ENCODE measurements at regions of chr11 and their contacts with region 1.

Region 1: GRCh38 chr11:33987975-33988580 is 63.5 kb upstream of the CAPRIN1 start:
- DNase-seq: no peak
- ATAC-seq: peak; percentile 96
- H3K4me3 ChIP-seq: no peak overlapping the region
- H3K27ac ChIP-seq: no peak overlapping the region
- H3K4me1 ChIP-seq: no peaks in the 10 kb centered on the region
- H3K27me3 ChIP-seq: no peaks in the 10 kb centered on the region
- CTCF ChIP-seq: peak; percentile 74 to 77 (median 76)
- EP300 ChIP-seq: no peak
- POLR2A ChIP-seq: no peak
- RAD21 ChIP-seq: peak; percentile 85

Region 2: DNA sequence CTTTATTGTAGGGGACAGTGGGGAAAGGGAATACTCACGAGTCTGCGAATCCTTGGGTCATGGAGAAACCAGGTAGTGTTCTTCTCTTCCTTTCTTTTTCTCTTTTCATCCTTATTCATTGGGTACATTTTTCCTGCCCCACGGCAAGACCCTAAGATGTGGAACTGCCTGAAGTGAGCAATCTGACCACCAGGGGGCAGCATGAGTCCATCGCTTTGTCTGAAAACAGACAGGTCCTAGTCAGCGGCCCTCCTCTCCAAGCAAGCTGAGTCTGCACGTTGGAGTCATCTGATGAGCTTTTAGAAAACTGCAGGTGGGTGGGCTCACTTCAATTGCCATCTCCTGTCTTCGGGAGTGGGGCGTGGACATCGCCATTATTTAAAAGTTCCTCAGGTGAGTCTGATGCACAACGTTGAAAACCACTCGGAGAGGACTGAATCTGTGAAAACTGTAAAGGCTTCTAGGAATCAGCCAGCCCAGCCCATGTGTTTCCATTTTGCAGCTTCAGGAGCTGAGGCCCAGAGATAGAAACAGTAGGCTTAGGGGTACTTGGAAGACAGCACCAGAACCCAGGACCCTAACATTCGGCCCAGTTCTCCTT is 179.8 kb before region 1 on chr11:
- CTCF ChIA-PET with region 1: interaction called, 13 read pairs
- POLR2A ChIA-PET with region 1: no interaction called
- RAD21 ChIA-PET with region 1: no interaction called
- SMC1A ChIA-PET with region 1: interaction called, 10 read pairs
- in situ Hi-C with region 1: no loop called
- intact Hi-C with region 1: no loop called
- DNase-seq: peak; percentile 37
- ATAC-seq: peak; percentile 99
- H3K4me3 ChIP-seq: no peak overlapping the region
- H3K27ac ChIP-seq: no peak overlapping the region
- H3K4me1 ChIP-seq: no peaks in the 10 kb centered on the region
- H3K27me3 ChIP-seq: peaks cover 0 to 2% of the 10 kb centered on the region in 2 experiments; a peak in 2 of 4 replicates
- CTCF ChIP-seq: peak; percentile 82 to 92 (median 83)
- EP300 ChIP-seq: no peak
- POLR2A ChIP-seq: no peak
- RAD21 ChIP-seq: peak; percentile 78

Region 3: DNA sequence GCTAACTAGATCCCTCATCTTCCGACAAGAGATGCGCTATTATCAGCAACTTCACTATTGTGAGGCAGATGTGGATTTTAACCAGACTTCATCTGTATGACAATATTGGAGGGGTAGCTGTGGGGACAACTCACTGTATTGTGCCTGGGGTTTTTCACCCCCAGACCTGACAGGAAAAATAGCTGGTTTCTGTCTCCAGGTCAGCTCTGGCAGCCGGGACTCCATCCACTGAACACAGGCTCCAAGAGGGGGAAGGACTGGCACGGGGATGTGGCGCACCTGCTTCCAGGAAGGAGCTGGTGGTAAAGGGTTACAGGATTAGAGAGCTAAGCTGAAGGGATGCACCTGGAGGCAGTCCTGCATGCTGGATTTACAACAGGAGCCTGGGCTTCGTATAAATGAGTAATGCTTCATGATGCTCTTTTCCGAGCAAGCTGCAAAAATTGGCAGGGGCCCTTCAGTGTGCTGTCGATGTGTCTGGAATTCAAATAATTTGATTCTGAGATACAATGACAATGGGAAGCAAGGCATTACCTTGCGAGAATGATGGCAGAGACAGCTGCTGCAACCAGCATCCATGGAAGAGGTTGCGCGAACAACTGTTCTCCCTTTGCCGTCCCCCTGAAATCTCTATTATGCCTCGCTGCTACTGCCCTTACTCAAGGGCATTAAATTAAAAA is 145.7 kb before region 1 on chr11:
- CTCF ChIA-PET with region 1: interaction called, 11 read pairs
- POLR2A ChIA-PET with region 1: no interaction called
- RAD21 ChIA-PET with region 1: no interaction called
- SMC1A ChIA-PET with region 1: interaction called, 3 read pairs
- in situ Hi-C with region 1: no loop called
- intact Hi-C with region 1: no loop called
- DNase-seq: no peak
- ATAC-seq: no peak
- H3K4me3 ChIP-seq: no peak overlapping the region
- H3K27ac ChIP-seq: no peak overlapping the region
- H3K4me1 ChIP-seq: no peaks in the 10 kb centered on the region
- H3K27me3 ChIP-seq: peaks cover 0 to 3% of the 10 kb centered on the region in 2 experiments; a peak in 1 of 4 replicates
- CTCF ChIP-seq: no peak
- EP300 ChIP-seq: no peak
- POLR2A ChIP-seq: no peak
- RAD21 ChIP-seq: no peak

Region 4: DNA sequence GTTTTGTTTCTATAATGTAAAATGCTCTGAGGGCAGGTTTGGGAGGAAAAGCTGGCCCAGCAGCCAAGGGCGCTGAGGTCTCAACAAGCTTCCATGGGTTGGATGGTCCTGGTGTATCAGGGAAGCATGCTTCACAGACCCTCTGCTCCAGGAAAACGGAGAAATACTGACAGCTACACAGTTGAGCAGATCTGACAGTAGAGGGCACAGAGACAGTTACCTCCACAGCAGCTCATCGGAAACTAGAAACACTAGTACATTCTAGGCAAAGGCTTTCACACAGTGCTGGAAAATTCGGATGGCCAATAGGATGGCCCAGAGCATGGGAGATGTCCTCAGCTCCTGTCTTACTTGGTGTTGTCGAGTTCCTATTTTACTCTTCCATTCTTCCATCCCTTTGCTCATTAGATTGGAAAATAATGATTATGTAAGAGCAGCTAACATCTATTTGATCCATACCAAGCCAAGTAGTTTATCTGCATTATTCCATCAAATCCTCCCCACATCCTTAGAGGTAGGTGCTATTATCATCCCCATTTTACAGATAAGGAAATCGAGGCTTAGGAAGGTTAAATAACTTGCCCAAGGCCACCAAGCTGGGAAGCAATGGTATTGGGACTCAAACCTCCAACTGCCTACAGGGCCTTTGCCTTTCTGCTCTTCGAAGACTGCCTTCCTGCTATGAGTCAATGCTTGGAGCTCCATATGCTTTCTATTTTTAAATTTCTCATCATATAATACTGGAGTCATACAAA is 124.5 kb before region 1 on chr11:
- CTCF ChIA-PET with region 1: interaction called, 70 read pairs
- POLR2A ChIA-PET with region 1: no interaction called
- RAD21 ChIA-PET with region 1: interaction called, 29 read pairs
- SMC1A ChIA-PET with region 1: interaction called, 20 read pairs
- in situ Hi-C with region 1: no loop called
- intact Hi-C with region 1: loop called (anchors 1 kb)
- DNase-seq: no peak
- ATAC-seq: no peak
- H3K4me3 ChIP-seq: no peak overlapping the region
- H3K27ac ChIP-seq: no peak overlapping the region
- H3K4me1 ChIP-seq: no peaks in the 10 kb centered on the region; the same call in 1 of the 2 replicates
- H3K27me3 ChIP-seq: peaks cover 1 to 5% of the 10 kb centered on the region in 2 experiments; a peak in 3 of 4 replicates
- CTCF ChIP-seq: 0 out of 6 replicates have a peak, but pooled peaks of 1 of the 3 experiments have one; percentile 6
- EP300 ChIP-seq: no peak
- POLR2A ChIP-seq: no peak
- RAD21 ChIP-seq: peak; percentile 19; the same call in 1 of the 2 replicates

Region 5: GRCh38 chr11:33970984-33971466 is 17.1 kb before region 1 on chr11:
- CTCF ChIA-PET with region 1: interaction called, 19 read pairs
- POLR2A ChIA-PET with region 1: no interaction called
- RAD21 ChIA-PET with region 1: interaction called, 4 read pairs
- SMC1A ChIA-PET with region 1: interaction called, 11 read pairs
- in situ Hi-C with region 1: no loop called
- intact Hi-C with region 1: no loop called
- DNase-seq: no peak
- ATAC-seq: peak; percentile 93
- H3K4me3 ChIP-seq: no peak overlapping the region
- H3K27ac ChIP-seq: no peak overlapping the region
- H3K4me1 ChIP-seq: no peaks in the 10 kb centered on the region
- H3K27me3 ChIP-seq: no peaks in the 10 kb centered on the region
- CTCF ChIP-seq: peak; percentile 75 to 78 (median 76); a peak in 5 of 6 replicates
- EP300 ChIP-seq: no peak
- POLR2A ChIP-seq: no peak
- RAD21 ChIP-seq: peak; percentile 100